ENCODE measurements at regions of chr14 and their contacts with region 1.

Region 1: DNA sequence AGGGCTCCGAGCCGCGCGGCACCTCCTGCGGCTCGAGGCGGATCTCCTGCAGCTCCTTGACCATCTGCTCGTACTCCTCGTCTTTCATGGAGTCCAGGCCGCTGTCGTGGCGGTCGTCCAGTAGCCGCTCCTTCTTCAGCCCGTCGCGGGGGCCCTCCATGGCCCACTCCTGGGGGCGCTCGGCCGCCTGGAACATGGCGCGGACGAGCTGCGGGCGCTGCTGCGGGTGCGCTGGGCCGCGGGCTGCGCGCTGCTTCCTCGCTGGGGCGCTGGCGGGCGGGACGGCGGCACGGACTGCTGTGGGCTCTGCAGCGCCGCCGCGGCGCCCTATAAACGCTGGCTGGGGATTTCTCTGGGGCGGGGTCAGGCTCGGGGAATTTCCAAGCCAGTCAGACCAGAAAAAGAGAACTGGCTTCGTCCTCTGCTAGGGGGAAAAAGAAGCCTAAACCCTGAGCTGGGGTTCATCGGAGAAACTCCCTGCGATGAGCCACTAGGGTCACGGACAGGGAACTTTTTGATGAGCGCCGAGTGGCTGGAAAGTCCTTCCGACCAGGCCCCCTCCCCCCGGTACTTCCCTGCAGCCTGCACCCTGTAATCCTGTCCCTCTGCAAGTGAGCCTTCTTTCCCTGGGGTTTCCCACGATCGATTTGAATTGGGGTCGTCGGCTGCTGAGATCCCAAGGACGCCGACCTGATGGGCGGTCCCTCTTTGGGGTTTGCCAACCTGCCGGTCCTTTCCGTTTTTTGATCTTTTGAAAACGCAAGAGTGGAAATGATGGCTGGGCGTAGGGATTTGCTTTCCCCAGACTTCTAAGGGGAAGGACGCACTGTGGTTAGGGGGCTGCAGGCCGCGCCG is at the start of gene NFKBIA:
- DNase-seq: peak; percentile 93
- ATAC-seq: peak; percentile 69 to 87
- H3K4me3 ChIP-seq: peak within 1 kb of the TSS; percentile 93
- H3K27ac ChIP-seq: peak within 1 kb of the TSS; percentile 100
- H3K4me1 ChIP-seq: peaks cover 53% of the 10 kb centered on the region
- H3K27me3 ChIP-seq: no peaks in the 10 kb centered on the region
- CTCF ChIP-seq: peak; percentile 44
- total RNA-seq, gene NFKBIA: 331 TPM

Region 2: DNA sequence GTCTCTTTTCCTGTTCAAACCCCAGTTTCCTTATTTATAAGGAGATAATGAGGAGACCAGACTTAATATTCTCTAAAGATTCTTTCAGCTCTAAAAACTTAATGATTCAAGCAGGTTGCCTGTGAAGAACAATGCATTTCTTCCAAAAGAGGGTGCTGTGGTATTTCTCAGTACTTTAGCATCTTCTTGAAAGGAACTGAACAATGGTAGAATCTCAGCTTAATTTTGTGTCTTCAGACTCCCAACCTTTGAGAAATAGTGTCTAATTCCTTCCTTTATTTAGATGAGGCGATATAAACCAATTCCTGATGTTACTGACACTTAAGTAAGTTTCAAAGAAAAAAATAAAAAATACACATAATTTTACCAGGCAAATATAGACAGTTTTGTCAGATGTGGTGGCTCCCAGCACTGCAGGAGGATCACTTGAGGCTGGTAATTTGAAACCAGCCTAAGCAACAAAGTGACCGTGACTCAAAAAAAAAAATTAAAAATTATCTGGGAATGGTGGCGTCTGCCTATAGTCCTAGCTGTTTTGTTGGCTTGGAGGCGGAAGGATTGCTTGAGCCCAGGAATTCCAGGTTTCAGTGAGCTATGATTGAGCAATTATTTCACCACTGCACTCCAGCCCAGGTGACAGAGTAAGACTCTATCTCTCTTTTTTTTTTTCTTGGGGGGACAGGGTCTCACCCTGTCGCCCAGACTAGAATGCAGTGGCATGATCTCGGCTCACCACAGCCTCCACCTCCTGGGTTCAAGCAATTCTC is 189.4 kb before region 1 on chr14:
- intact Hi-C with region 1: loop called (anchors 10 kb)
- DNase-seq: no peak
- ATAC-seq: peak in 1 of 2 donors; percentile 86
- H3K4me3 ChIP-seq: no peak overlapping the region
- H3K27ac ChIP-seq: peak overlapping the region; percentile 3
- H3K4me1 ChIP-seq: peaks cover 11% of the 10 kb centered on the region
- H3K27me3 ChIP-seq: no peaks in the 10 kb centered on the region
- CTCF ChIP-seq: peak; percentile 55

Region 3: DNA sequence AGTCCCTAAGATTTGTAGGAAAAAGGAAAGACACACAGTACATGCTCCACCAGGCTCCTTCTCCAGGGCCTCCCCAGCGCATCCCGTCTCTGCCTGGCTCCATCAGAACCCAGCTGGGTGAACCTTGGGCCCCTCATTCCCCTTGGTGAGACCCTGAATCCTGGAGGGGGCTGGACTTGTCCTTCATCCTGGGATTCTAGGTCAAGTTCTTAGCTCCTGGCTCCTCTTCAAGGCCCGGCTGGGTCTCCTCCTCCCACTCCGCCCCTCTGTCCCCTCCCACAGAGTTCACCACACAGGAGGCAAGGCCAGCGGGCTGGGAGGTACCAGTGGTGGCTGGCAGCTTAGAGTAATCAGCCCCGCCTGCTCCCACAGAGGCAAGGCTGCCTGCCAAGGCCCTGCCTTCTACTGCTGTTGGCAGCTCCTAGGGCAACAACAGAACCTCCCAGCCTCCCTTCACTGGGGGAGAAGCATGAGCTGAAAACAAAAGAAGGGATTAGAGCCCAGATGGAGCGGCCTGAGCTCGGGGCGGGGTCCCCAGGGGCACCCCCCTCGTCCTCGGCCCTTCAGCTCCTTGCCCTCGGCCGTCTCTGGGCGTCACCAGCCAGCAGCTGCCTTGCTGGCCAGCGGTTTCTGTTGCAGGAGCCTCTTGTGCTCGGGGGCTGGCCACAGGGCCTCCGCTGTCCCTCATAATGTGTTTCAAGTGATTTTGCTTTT is 63.1 kb before region 1 on chr14:
- intact Hi-C with region 1: loop called (anchors 5 kb)
- DNase-seq: peak; percentile 98
- ATAC-seq: peak; percentile 93 to 95
- H3K4me3 ChIP-seq: peak overlapping the region; percentile 38
- H3K27ac ChIP-seq: peak overlapping the region; percentile 92
- H3K4me1 ChIP-seq: peaks cover 80% of the 10 kb centered on the region
- H3K27me3 ChIP-seq: no peaks in the 10 kb centered on the region
- CTCF ChIP-seq: no peak

Measured in lower lobe of right lung (tissue), 2 donors.